Prostate gland (tissue), 2 donors: ENCODE measurements at regions of chr1 and their contacts with region 1.

Region 1: DNA sequence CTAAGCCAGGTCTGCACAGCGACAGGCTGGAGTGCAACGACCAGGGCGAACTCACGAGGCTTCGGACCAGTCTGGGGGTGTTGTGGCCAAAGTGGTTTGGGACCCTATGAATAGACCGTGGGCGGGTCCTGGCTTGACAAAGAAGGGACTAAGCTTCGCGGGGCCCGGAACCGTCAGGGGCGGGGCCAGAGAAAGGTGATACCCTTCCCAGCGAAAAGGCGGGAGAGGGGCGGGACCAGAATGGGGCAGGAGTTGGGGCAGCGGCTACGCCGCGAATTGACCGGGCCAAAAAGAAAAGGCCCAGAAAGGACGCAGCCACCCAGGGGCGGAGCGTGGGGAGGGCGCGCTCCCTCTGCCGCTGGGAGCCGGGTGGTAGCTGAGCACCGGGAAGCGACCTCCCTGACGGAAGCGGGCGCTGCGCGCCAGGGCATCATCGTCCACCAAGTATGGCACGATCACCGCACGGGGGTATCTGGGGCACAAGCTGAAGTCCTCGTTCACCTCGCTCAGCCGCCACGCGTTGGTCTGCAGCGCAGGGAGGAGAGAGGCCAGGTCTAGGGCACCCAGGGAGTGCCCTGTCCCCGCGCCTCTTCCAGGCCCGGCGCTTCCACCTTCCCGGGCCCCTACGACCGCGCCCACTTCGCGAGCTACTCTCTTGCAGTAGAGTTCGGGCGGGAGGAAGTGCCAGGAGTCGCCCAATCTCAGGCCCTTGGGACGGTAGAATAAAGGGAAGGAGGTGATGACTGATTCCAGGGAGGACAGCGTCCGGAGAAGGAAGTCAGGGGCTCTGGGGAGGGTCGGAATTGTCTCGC is 6.7 kb upstream of the FAM167B start:
- DNase-seq: peak; percentile 76
- H3K4me3 ChIP-seq: peak overlapping the region; percentile 36 to 52
- H3K27ac ChIP-seq: peak overlapping the region; percentile 76 to 81
- H3K4me1 ChIP-seq: no peaks in the 10 kb centered on the region
- H3K27me3 ChIP-seq: no peaks in the 10 kb centered on the region
- CTCF ChIP-seq: peak in 2 of 4 experiments; percentile 28 to 50
- POLR2A ChIP-seq: peak; percentile 90

Region 2: DNA sequence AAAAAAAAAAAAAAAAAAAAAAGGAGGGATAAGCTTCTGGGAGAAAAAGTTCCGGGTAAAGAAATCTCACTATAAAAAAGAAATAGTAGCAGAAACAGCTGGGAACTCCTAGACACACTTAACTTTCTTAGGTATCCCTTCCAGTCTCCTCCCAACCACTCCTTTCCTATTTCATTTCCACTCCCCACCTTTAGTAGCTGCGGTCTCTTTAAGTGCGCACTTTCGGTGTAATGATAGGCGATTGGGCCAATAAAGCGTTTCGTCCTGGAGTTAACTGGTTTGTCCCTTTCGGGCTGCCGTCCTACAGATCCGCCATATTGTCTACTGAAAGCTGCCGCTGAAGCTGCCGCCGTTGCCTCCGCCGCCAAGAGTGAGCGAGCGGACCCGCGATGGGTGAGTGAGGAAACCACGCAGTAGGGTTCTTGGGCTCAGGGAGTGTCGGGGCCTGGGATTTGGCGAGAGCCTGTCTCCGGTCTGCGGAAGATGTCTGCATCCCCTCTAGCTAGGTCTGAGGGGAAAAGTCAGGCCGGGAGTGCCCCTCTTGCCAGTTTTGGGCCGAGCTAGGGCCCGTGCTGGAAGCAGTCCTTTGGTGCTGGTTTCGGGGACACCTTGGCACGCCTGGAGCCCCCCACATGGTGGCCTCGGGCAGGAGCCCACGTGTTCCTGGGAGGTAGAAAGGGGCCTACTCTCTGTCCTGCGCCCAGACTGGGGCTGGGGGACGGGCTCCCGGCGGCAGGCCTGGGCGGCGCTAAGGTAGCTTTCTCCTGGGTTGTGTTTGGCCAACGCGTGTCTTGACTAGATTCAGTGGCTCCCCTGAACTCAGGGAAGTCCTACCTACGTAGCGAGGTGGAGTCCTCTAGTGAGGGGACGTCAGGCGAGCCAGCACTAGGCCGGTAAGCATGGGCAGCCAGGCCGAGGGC is 132.3 kb before region 1 on chr1 and contains the start of gene KPNA6:
- intact Hi-C with region 1: no loop called
- DNase-seq: peak; percentile 87
- H3K4me3 ChIP-seq: peak within 1 kb of the TSS; percentile 78 to 95
- H3K27ac ChIP-seq: peak within 1 kb of the TSS; percentile 88 to 90
- H3K4me1 ChIP-seq: peaks cover 5% of the 10 kb centered on the region
- H3K27me3 ChIP-seq: no peaks in the 10 kb centered on the region
- CTCF ChIP-seq: peak in 2 of 4 experiments; percentile 20 to 21
- POLR2A ChIP-seq: peak; percentile 42
- total RNA-seq, gene KPNA6: 37.9 to 56.9 TPM

Region 3: DNA sequence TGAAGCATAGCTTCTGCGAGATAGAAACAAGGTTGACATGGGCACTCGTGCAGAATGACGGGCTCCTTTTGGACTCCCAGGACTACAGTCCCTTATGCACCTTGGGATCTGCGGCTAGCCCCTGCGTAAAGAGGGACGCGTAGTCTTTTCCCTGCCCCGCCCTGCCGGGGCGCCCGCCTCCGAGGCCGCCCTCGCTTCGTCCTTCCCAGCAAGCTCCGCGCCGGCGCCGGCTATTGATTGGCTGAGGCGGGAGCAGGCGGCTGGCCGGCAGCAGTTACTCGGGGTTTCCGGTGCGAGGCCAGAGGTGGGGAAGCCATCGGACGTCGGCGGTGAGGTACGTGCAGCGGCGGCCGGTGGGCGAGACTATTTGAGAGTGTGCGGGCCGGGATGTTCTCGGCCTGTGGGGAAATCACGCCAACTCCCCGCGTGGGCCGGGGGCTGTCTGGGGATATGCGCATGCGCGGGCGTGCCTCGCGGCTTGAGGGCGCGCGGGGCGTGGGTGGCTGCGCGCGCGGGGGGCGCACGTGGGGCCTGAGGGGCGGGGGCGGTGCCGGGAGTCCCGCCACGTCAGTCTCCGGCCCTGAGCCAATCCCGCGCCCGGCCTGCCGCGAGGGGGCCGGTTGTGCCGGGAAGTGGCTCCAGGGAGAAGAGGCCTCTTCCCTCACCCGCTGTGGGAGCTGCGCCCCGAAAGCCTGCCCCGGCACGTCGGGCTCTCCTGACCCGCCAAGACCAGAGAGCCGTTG is 60.7 kb before region 1 on chr1 and contains the start of gene TXLNA:
- intact Hi-C with region 1: loop called (anchors 5 kb)
- DNase-seq: peak; percentile 90
- H3K4me3 ChIP-seq: peak within 1 kb of the TSS; percentile 57 to 59
- H3K27ac ChIP-seq: peak within 1 kb of the TSS; percentile 87 to 89
- H3K4me1 ChIP-seq: no peaks in the 10 kb centered on the region
- H3K27me3 ChIP-seq: no peaks in the 10 kb centered on the region
- CTCF ChIP-seq: peak in 2 of 4 experiments; percentile 7 to 16
- POLR2A ChIP-seq: peak; percentile 41
- total RNA-seq, gene TXLNA: 49.6 to 70.8 TPM

Region 4: DNA sequence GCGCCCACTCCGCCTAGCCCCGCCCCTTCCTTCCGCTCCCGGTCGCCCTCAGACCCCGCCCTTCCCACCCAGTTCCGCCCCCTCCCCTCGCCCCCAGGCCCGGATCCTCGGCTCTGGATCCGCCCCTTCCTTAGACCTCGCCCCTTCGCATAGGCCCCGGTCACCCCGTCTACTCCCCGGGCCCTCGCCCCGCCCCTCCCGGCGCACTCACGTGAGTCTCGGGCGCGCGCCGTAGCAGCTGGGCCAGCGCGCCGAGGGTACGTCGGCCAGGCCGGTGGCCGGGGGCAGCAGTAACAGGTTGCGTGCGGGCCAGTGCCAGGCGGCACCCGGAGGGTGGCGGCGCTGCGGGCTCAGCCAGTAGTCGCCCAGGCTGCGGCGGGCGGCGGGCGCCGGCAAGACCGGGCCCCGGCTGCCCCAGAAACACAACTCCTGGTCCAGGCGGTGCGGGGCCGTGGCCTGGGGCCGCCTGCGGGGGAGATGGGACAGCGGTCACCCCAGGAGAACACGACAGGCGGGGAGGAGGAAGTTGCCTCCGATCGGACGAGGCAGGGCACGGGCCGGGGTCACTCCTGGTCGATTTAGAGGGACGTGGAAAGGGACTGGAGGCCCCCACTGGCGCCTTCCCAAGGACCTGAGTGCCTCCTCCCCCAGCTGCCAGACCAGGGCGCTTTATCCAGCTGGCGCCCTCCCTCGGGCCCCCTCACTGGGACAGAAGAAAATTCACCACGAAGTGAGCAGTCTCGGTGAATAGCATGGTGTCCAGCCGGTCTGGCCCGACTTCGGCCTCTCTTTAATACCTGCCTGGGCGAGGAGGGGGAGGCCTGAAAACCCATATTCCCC is 111.3 kb after region 1 on chr1:
- intact Hi-C with region 1: loop called (anchors 5 kb)
- DNase-seq: peak; percentile 96
- H3K4me3 ChIP-seq: peak overlapping the region; percentile 74 to 75
- H3K27ac ChIP-seq: peak overlapping the region; percentile 93
- H3K4me1 ChIP-seq: no peaks in the 10 kb centered on the region
- H3K27me3 ChIP-seq: no peaks in the 10 kb centered on the region
- CTCF ChIP-seq: peak in 2 of 4 experiments; percentile 22 to 38
- POLR2A ChIP-seq: peak; percentile 91